Posterior vena cava (tissue), 2 donors: ENCODE measurements at regions of chr1 and their contacts with region 1.

Region 1: DNA sequence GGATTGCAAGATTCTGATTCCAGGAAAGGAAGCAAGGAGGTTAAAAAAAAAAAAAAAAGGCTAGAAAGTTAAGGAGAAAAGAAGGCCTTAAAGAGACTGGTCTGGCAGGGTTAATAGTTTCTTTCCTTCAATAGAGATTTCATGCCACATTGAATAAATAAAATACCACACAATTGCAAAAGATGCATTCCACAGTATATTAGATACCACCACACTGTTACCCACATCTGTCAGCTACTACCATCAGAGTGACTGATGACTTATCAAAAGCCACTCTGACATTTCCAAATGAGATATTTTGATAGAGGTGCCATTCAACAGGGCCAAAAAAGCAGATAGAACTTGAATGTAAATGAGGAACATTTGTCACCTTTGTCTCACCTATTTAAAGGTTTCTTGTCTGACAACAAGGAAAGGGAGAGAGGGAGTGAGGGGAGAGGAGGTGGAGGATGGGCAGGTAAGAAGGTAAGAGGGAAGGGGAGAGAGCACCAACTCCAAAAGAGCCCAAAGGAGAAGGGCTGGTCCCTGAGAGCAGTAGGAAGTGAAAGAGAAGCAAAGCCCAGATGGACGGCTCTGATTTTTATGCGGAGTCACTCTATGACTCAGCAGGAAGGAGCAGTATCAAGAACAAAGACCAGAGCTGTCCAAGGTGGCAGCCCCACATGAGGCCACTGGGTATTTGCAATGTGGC is 38.3 kb downstream of the LRRN2 start:
- DNase-seq: no peak

Region 2: GRCh38 chr1:204619721-204620120 is 27.5 kb before region 1 on chr1:
- intact Hi-C with region 1: loop called in 1 of 2 experiments (anchors 1 kb)
- DNase-seq: no peak

Region 3: DNA sequence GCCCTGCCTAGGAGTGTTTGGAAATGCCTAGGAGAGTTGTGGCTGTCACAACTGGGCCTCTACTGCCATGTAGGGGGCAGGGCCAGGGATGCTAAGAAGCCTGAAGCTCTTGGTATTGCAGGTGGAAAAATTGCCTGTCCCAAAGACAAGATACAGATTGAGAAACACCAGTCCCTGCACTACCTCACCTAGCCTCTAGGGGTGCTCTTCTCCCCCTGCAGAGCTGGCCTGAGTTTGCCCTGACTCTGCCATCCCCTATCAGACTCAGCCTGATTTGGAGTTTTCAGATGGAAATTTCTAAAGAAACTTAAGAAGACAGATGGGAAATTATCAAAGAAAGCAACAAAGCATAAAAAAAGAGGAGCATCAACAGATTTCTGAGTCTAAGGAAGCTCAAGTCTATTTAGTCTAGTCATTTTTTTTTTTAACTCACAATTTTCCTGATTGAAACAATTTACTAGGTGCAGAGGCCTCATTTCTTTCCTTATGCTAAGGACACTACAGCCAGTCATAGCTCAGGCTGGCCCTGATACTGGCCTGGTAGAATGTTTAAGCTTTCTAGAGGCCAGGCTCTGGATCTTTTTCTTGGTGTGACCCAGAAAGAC is 99.7 kb after region 1 on chr1:
- intact Hi-C with region 1: loop called in 1 of 2 experiments (anchors 1 kb)
- DNase-seq: no peak